Panc1 (cell line): ENCODE measurements at regions of chr5 and their contacts with region 1.

Region 1: DNA sequence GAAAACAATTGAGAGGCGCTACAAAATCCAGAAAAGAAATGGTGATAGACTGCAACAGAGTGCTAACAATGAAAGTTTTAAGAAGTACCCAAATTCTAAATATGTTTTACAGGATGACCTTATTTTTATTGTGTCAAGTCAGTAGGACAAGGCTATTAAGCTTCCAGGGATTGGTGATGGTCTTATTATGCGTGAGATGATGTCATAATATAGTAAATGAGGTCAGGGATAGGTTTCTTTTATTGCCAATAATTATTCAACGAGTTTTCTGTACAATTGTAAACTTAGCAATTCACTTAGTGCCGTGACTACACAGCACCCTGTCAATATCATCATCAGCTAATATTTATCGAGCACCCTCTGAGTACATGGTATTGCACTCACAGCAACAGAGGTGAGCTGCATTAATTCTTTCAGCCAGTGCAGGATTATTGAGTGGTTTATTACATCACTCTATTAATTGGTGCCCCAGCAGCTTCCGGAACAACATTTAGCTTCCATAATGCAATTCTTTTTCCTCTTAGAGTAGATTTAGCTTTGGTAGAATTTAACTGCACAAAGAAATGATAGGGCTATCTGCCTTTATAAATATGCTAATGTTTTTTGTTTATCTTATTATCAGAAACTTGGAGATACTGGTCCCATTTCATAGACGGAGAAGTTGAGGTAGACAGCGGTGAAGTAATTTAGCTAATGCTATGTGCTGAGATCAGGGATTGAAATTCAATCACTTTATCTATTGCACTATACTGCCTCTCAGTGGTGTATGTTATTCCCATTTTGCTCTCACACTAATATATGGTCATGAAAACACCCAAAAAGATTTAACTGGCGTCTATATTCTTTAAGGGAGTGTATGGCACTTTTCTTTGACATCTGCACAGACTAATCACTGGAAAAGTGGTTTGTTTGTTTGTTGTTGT is 726.2 kb upstream of the WWC1 start:
- DNase-seq: no peak
- ATAC-seq: no peak
- H3K4me3 ChIP-seq: no peak overlapping the region
- H3K27ac ChIP-seq: no peak overlapping the region
- H3K4me1 ChIP-seq: no peaks in the 10 kb centered on the region
- H3K27me3 ChIP-seq: peaks cover 13% of the 10 kb centered on the region
- CTCF ChIP-seq: peak; percentile 32; the same call in 1 of the 2 replicates

Region 2: DNA sequence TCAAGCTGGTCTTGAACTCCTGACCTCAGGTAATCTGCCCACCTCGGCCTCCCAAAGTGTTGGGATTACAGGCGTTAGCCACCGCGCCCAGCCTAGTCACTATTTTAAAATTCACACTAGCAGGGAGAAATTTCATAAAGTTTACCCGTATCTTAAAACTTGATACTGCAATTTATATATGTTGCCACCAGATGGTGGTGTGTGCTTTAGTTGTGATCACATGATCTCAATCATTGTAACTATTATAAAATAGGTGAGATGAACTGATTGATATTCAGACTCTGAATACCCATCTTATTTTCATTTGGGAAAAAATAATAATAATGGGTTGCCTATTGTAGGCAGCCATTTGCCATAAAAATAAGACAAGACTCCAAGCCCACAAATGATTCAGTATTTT is 604.3 kb before region 1 on chr5:
- CTCF ChIA-PET with region 1: no interaction called
- POLR2A ChIA-PET with region 1: no interaction called
- in situ Hi-C with region 1: no loop called
- intact Hi-C with region 1: loop called (anchors 5 kb)
- DNase-seq: no peak
- ATAC-seq: no peak
- H3K4me3 ChIP-seq: no peak overlapping the region
- H3K27ac ChIP-seq: no peak overlapping the region
- H3K4me1 ChIP-seq: no peaks in the 10 kb centered on the region
- H3K27me3 ChIP-seq: no peaks in the 10 kb centered on the region
- CTCF ChIP-seq: peak; percentile 45

Region 3: GRCh38 chr5:167587772-167588437 is 22.6 kb after region 1 on chr5:
- CTCF ChIA-PET with region 1: no interaction called
- POLR2A ChIA-PET with region 1: no interaction called
- in situ Hi-C with region 1: no loop called
- intact Hi-C with region 1: no loop called
- DNase-seq: no peak
- ATAC-seq: peak; percentile 84
- H3K4me3 ChIP-seq: no peak overlapping the region
- H3K27ac ChIP-seq: no peak overlapping the region
- H3K4me1 ChIP-seq: no peaks in the 10 kb centered on the region
- H3K27me3 ChIP-seq: no peaks in the 10 kb centered on the region
- CTCF ChIP-seq: peak; percentile 73